HCT116 (cell line): ENCODE measurements at regions of chr2 and their contacts with region 1.

Region 1: GRCh38 chr2:14944562-14945346 is 312.2 kb downstream of the LRATD1 start:
- DNase-seq: peak; percentile 29
- ATAC-seq: peak; percentile 91
- H3K4me3 ChIP-seq: no peak overlapping the region
- H3K27ac ChIP-seq: no peak overlapping the region
- H3K4me1 ChIP-seq: no peaks in the 10 kb centered on the region
- H3K27me3 ChIP-seq: no peaks in the 10 kb centered on the region
- CTCF ChIP-seq: peak; percentile 40 to 65 (median 58); a peak in 5 of 6 replicates
- POLR2A ChIP-seq: no peak
- RAD21 ChIP-seq: peak; percentile 65

Region 2: GRCh38 chr2:13046557-13047165 is 1898.1 kb before region 1 on chr2:
- CTCF ChIA-PET with region 1: no interaction called
- POLR2A ChIA-PET with region 1: no interaction called
- RAD21 ChIA-PET with region 1: no interaction called
- intact Hi-C with region 1: loop called (anchors 2 kb)
- DNase-seq: peak; percentile 6
- ATAC-seq: no peak
- H3K4me3 ChIP-seq: no peak overlapping the region
- H3K27ac ChIP-seq: no peak overlapping the region
- H3K4me1 ChIP-seq: no peaks in the 10 kb centered on the region
- H3K27me3 ChIP-seq: no peaks in the 10 kb centered on the region
- CTCF ChIP-seq: peak; percentile 11 to 44 (median 30); a peak in 4 of 6 replicates
- POLR2A ChIP-seq: no peak
- RAD21 ChIP-seq: peak; percentile 53

Region 3: GRCh38 chr2:13193898-13194297 is 1750.9 kb before region 1 on chr2:
- CTCF ChIA-PET with region 1: no interaction called
- POLR2A ChIA-PET with region 1: no interaction called
- RAD21 ChIA-PET with region 1: no interaction called
- intact Hi-C with region 1: loop called (anchors 10 kb)
- DNase-seq: no peak
- ATAC-seq: no peak
- H3K4me3 ChIP-seq: no peak overlapping the region
- H3K27ac ChIP-seq: no peak overlapping the region
- H3K4me1 ChIP-seq: no peaks in the 10 kb centered on the region
- H3K27me3 ChIP-seq: no peaks in the 10 kb centered on the region
- CTCF ChIP-seq: peak in 1 of 3 experiments; percentile 23; a peak in 1 of 6 replicates
- POLR2A ChIP-seq: no peak
- RAD21 ChIP-seq: 0 out of 2 replicates have a peak, but pooled peaks have one; percentile 26

Region 4: DNA sequence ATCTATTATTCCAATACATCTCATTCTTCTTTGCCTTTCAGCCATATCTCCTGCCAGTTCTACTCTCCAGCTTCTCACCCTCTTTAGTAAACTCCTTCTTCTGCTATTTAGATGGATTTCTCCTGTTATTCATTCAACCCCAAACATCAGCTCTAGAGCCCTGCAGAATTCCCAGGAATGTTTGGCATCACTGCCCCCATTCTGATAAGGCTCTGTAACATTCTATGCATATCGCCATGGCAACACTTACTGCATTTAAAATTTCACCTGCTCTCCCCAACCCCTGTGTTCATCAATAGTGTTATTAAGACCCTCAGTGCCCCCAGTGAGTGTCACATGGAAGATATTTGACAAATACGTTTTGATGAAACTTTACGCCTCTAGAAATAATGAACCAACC is 283.6 kb before region 1 on chr2:
- CTCF ChIA-PET with region 1: no interaction called
- POLR2A ChIA-PET with region 1: no interaction called
- RAD21 ChIA-PET with region 1: no interaction called
- intact Hi-C with region 1: no loop called
- DNase-seq: no peak
- ATAC-seq: no peak
- H3K4me3 ChIP-seq: no peak overlapping the region
- H3K27ac ChIP-seq: no peak overlapping the region
- H3K4me1 ChIP-seq: no peaks in the 10 kb centered on the region
- H3K27me3 ChIP-seq: no peaks in the 10 kb centered on the region
- CTCF ChIP-seq: no peak
- POLR2A ChIP-seq: no peak
- RAD21 ChIP-seq: no peak

Region 5: DNA sequence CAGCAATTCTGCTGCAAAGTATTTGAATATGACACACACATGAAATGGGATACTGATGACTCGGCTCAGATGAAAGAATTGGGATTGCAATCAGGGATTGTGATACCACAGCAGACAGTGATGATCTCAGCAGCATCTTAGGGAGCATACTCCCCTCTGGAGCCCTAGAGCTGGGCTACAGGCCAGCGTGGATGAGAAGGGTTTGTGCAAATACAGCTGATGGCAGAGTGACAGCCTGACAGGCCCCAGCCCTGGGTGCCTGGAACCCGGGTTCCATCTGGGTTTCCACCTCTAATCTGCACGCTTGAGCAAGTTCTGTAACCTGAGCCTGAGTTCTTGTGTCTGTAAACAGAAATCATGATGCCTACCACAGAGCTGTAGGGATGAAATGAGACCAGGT is 105.7 kb after region 1 on chr2:
- CTCF ChIA-PET with region 1: no interaction called
- POLR2A ChIA-PET with region 1: no interaction called
- RAD21 ChIA-PET with region 1: no interaction called
- intact Hi-C with region 1: no loop called
- DNase-seq: no peak
- ATAC-seq: no peak
- H3K4me3 ChIP-seq: no peak overlapping the region
- H3K27ac ChIP-seq: no peak overlapping the region
- H3K4me1 ChIP-seq: no peaks in the 10 kb centered on the region
- H3K27me3 ChIP-seq: peaks cover 30% of the 10 kb centered on the region
- CTCF ChIP-seq: no peak
- POLR2A ChIP-seq: no peak
- RAD21 ChIP-seq: no peak